Right lobe of liver (tissue), 6 donors: ENCODE measurements at regions of chr6 and their contacts with region 1.

Region 1: GRCh38 chr6:111709615-111710398 is 104.1 kb upstream of the TRAF3IP2 start:
- DNase-seq: peak in 2 of 3 donors; percentile 47 to 70
- ATAC-seq: peak; percentile 94 to 97 (median 95)
- H3K4me3 ChIP-seq: peak overlapping the region in 2 of 3 donors; percentile 15 to 21
- H3K27ac ChIP-seq: no peak overlapping the region
- H3K4me1 ChIP-seq: peaks cover 0 to 5% (median 0%) of the 10 kb centered on the region in 4 donors
- H3K27me3 ChIP-seq: no peaks in the 10 kb centered on the region
- CTCF ChIP-seq: peak; percentile 67 to 91 (median 70)
- POLR2A ChIP-seq: no peak

Region 2: DNA sequence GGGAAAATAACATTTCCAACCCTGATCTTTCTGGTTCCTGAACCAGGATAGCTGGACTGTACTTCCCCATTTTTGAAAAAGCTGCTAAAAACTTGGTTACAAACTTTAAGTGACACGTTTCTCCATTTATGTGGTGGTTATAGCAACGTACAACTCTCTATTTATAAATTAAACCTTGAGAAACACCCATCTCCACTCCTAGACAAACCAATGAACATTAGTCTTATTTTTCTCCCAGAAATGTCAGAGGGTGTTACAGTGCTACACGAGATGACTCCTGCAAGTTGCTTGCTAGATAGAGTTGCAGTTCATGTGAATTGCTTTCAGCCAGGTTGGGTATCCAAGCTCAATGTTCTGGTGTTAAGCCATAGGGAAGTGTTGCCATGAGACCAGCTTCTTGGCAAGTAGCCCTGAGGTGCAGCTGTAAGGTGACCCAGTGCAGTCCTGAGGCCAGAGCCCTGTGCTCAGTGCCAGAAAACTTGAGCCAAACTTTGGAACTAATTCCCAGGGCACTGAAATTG is 175.5 kb before region 1 on chr6:
- intact Hi-C with region 1: no loop called
- DNase-seq: peak; percentile 66 to 92 (median 84)
- ATAC-seq: peak; percentile 95 to 98 (median 96)
- H3K4me3 ChIP-seq: no peak overlapping the region
- H3K27ac ChIP-seq: no peak overlapping the region
- H3K4me1 ChIP-seq: peaks cover 0 to 8% (median 3%) of the 10 kb centered on the region in 4 donors
- H3K27me3 ChIP-seq: no peaks in the 10 kb centered on the region
- CTCF ChIP-seq: no peak
- POLR2A ChIP-seq: no peak

Region 3: GRCh38 chr6:111997078-111997852 is 287.5 kb after region 1 on chr6:
- intact Hi-C with region 1: loop called in 1 of 2 experiments (anchors 5 kb)
- DNase-seq: peak; percentile 79 to 85 (median 81)
- ATAC-seq: peak; percentile 98 to 100 (median 99)
- H3K4me3 ChIP-seq: no peak overlapping the region
- H3K27ac ChIP-seq: no peak overlapping the region
- H3K4me1 ChIP-seq: peaks cover 0 to 6% (median 0%) of the 10 kb centered on the region in 4 donors
- H3K27me3 ChIP-seq: no peaks in the 10 kb centered on the region
- CTCF ChIP-seq: peak; percentile 87 to 94 (median 92)
- POLR2A ChIP-seq: no peak

Region 4: GRCh38 chr6:112043032-112044007 is 333.5 kb after region 1 on chr6:
- intact Hi-C with region 1: loop called in 1 of 2 experiments (anchors 10 kb)
- DNase-seq: peak; percentile 89 to 91 (median 91)
- ATAC-seq: peak; percentile 95 to 97 (median 96)
- H3K4me3 ChIP-seq: peak overlapping the region; percentile 48 to 64 (median 52)
- H3K27ac ChIP-seq: peak overlapping the region; percentile 49 to 80 (median 79)
- H3K4me1 ChIP-seq: peaks cover 0 to 3% (median 1%) of the 10 kb centered on the region in 4 donors
- H3K27me3 ChIP-seq: no peaks in the 10 kb centered on the region
- CTCF ChIP-seq: peak; percentile 96 to 98 (median 98)
- POLR2A ChIP-seq: peak; percentile 68

Region 5: GRCh38 chr6:112163295-112164257 is 453.8 kb after region 1 on chr6:
- intact Hi-C with region 1: loop called in 1 of 2 experiments (anchors 10 kb)
- DNase-seq: peak; percentile 75 to 82 (median 75)
- ATAC-seq: peak; percentile 100
- H3K4me3 ChIP-seq: no peak overlapping the region
- H3K27ac ChIP-seq: no peak overlapping the region
- H3K4me1 ChIP-seq: no peaks in the 10 kb centered on the region
- H3K27me3 ChIP-seq: no peaks in the 10 kb centered on the region
- CTCF ChIP-seq: peak; percentile 79 to 93 (median 88)
- POLR2A ChIP-seq: no peak